ENCODE measurements at regions of chr6 and their contacts with region 1.

Region 1: GRCh38 chr6:75526502-75527127 is 33.0 kb upstream of the FILIP1 start:
- DNase-seq: no peak
- H3K4me3 ChIP-seq: no peak overlapping the region
- H3K27me3 ChIP-seq: no peaks in the 10 kb centered on the region
- CTCF ChIP-seq: peak; percentile 65

Region 2: DNA sequence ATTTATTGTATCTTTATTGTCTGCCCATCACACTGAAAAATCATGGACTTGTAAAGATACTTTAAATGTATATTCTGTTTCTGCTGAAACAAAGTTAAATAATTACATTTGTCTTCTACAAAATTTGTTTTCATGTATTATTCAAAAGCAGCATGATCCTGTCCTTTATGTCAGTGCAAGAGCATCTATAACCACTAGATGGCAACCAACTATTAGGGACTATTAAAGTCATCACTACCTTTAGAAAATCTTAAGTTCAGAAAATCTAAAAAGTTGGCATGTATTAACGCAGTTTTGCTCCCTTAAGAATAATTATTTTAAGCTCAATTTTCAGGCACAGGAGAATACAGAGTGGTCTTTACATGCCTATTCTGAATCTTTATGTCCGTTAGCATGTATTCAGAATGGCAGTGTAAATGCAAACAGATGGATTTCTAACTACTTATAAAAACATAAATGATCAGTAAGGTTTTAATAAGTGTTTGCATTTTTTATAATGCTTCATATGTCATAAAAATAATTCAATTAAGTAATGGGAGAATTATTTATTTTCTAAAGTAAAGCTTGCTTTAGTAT is 259.8 kb before region 1 on chr6:
- CTCF ChIA-PET with region 1: interaction called, 19 read pairs
- POLR2A ChIA-PET with region 1: no interaction called
- DNase-seq: no peak
- H3K4me3 ChIP-seq: no peak overlapping the region
- H3K27me3 ChIP-seq: no peaks in the 10 kb centered on the region
- CTCF ChIP-seq: peak; percentile 76

Region 3: DNA sequence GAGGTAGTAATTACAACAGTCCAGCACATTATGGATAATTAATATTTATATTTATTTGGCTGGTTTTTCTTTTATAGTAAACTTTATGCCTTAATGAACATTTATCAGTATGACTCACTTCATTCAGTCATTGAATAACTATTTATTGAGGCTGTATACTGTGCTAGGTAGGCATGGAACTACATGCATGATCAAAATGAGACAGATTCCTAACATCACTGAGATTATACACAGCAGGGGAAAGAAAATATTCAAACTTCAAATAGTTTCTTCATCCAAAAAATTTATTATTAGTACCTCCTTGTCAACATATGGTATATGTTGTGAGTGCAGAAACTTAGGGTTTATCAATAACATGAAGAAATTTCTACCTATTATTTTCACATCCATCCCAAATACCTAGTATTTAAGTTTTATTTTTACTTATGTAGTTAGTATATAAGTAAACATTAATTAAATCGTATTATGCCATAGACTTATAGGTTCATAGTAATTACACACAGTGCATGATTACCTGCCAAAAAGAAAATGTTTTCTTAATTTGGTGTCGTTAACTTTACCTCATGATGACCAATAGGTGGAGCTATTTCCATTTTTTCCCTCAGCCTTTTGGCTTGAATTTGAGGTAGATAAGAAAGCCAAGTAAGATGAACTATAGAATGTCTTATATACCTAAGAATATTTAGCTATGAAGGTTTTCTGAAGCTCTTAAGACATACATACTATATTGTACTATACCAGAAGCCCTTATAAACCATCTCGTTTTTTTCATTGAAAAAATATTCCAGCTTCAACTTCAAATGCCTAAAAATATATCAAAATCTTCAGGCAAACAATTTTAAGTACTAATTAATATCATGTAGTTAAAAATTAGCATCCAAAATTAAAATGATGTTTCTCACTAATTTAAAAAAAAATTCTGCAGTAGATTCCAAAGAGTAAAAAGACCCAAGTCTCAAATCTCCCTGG is 229.5 kb before region 1 on chr6:
- CTCF ChIA-PET with region 1: interaction called, 22 read pairs
- POLR2A ChIA-PET with region 1: interaction called, 4 read pairs
- DNase-seq: no peak
- H3K4me3 ChIP-seq: no peak overlapping the region
- H3K27me3 ChIP-seq: no peaks in the 10 kb centered on the region
- CTCF ChIP-seq: peak; percentile 59

Region 4: DNA sequence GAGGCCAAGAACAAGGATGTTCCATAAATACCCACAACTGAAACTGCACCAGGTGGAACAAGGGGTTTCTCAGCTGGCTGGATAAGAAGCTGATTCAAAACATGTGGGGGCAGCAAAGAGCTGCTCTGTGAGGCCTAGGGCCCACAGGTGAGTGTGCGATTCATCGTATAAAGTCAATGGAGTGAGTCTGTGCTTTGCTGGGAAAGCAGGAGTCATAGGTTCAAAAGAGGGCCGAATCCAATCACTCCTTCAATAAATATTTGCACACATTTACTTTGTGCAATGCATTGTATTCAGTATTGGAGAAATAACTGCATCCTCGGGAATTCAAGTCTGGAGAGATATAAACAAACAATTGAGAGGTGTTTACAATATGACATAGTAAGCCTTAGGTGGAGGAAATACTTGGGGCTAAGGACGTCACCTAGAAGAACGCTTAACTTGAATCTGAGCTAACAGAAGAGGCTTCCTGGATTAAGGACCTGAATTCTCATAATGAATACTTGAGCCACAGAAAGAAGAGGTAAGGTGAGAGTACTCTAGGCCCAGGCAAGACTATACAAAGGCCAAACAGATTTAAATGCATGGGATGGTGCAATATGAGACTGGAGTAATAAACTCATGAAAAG is 158.3 kb before region 1 on chr6:
- CTCF ChIA-PET with region 1: interaction called, 12 read pairs
- POLR2A ChIA-PET with region 1: no interaction called
- DNase-seq: no peak
- H3K4me3 ChIP-seq: no peak overlapping the region
- H3K27me3 ChIP-seq: no peaks in the 10 kb centered on the region
- CTCF ChIP-seq: peak; percentile 31

Region 5: DNA sequence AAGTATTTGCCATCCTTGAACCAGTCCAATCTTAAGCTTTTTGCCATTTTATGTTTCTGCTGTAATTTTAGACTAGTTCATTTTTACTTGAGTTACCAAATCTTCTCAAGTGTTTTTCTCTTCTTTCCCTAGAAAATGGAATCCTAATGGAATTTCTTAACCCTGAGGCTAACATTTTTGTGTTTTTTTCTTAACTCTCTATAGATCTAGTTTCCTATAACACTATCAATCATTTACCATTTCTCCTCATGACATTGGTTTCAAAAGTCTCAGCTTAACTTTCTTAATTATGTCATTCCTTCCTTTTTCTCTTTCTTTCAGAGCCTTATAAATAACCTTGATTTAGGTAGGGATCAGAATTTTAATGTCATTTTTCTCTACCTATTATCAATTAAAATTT is 129.9 kb after region 1 on chr6:
- CTCF ChIA-PET with region 1: no interaction called
- POLR2A ChIA-PET with region 1: no interaction called
- DNase-seq: no peak
- H3K4me3 ChIP-seq: no peak overlapping the region
- H3K27me3 ChIP-seq: no peaks in the 10 kb centered on the region
- CTCF ChIP-seq: no peak

Measured in BJ (cell line).